T-cell (primary cell): ENCODE measurements at regions of chr12 and their contacts with region 1.

Region 1: GRCh38 chr12:100031836-100032235 is 47.1 kb upstream of the ANKS1B start:
- DNase-seq: no peak
- ATAC-seq: no peak
- H3K4me3 ChIP-seq: no peak overlapping the region
- H3K4me3 Mint-ChIP-seq: no peak overlapping the region
- H3K27ac ChIP-seq: no peak overlapping the region
- H3K27ac Mint-ChIP-seq: no peak overlapping the region
- H3K4me1 ChIP-seq: no peaks in the 10 kb centered on the region
- H3K4me1 Mint-ChIP-seq: no peaks in the 10 kb centered on the region
- H3K27me3 ChIP-seq: no peaks in the 10 kb centered on the region
- H3K27me3 Mint-ChIP-seq: no peaks in the 10 kb centered on the region

Region 2: GRCh38 chr12:100077367-100077766 is 45.5 kb after region 1 on chr12:
- CTCF ChIA-PET with region 1: interaction called in 1 of 2 experiments, 11 read pairs
- POLR2A ChIA-PET with region 1: no interaction called
- DNase-seq: no peak
- ATAC-seq: no peak
- H3K4me3 ChIP-seq: no peak overlapping the region
- H3K4me3 Mint-ChIP-seq: no peak overlapping the region
- H3K27ac ChIP-seq: no peak overlapping the region
- H3K27ac Mint-ChIP-seq: no peak overlapping the region
- H3K4me1 ChIP-seq: no peaks in the 10 kb centered on the region
- H3K4me1 Mint-ChIP-seq: no peaks in the 10 kb centered on the region
- H3K27me3 ChIP-seq: no peaks in the 10 kb centered on the region
- H3K27me3 Mint-ChIP-seq: no peaks in the 10 kb centered on the region